ENCODE measurements at regions of chr7 and their contacts with region 1.

Region 1: DNA sequence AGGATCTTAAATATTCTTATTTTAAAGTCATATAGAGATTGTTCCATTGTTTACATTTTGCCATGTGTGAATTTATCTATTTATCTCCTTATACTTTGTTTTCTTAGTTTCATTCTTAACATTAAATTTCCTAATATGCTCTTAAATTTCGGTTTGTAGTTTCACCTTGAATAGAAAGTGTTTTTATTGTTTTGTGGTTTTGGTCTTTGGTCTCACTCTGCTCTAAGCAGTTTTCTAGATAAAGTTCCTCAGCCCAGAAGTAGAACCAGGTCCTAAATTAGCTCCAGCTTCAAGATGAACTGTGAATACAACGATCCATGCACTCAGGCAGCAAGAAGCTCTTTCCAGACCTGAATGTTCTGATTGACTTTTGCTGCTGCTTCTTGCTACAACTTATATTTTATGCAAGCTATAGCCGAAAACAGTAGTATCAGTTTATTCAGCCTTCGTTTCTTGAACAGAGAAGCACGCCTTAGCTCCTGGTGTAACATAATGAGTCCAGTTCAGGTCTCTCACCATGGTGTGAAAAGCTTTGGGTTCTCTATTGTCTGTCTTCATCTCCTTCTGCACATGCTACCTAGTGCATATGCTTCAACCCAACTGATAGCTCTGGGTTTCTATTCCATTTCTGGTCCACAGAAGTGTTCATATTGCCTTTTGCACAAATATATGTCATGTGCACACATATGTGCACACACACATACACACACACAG is 95.3 kb downstream of the SEM1 start:
- DNase-seq: no peak
- ATAC-seq: no peak
- H3K4me3 ChIP-seq: no peak overlapping the region
- H3K4me3 Mint-ChIP-seq: no peak overlapping the region
- H3K27ac ChIP-seq: no peak overlapping the region
- H3K27ac Mint-ChIP-seq: no peak overlapping the region
- H3K4me1 ChIP-seq: no peaks in the 10 kb centered on the region
- H3K4me1 Mint-ChIP-seq: no peaks in the 10 kb centered on the region
- H3K27me3 ChIP-seq: no peaks in the 10 kb centered on the region
- H3K27me3 Mint-ChIP-seq: peaks cover 7% of the 10 kb centered on the region
- CTCF ChIP-seq: no peak

Region 2: GRCh38 chr7:96558530-96558929 is 55.8 kb before region 1 on chr7:
- CTCF ChIA-PET with region 1: no interaction called
- POLR2A ChIA-PET with region 1: no interaction called
- intact Hi-C with region 1: loop called in 1 of 2 experiments (anchors 5 kb)
- DNase-seq: no peak
- ATAC-seq: no peak
- H3K4me3 ChIP-seq: no peak overlapping the region
- H3K4me3 Mint-ChIP-seq: no peak overlapping the region
- H3K27ac ChIP-seq: no peak overlapping the region
- H3K27ac Mint-ChIP-seq: no peak overlapping the region
- H3K4me1 ChIP-seq: no peaks in the 10 kb centered on the region
- H3K4me1 Mint-ChIP-seq: no peaks in the 10 kb centered on the region
- H3K27me3 ChIP-seq: no peaks in the 10 kb centered on the region
- H3K27me3 Mint-ChIP-seq: peaks cover 5% of the 10 kb centered on the region
- CTCF ChIP-seq: no peak

Region 3: GRCh38 chr7:96589038-96589437 is 25.3 kb before region 1 on chr7:
- CTCF ChIA-PET with region 1: no interaction called
- POLR2A ChIA-PET with region 1: no interaction called
- intact Hi-C with region 1: no loop called
- DNase-seq: no peak
- ATAC-seq: no peak
- H3K4me3 ChIP-seq: no peak overlapping the region
- H3K4me3 Mint-ChIP-seq: no peak overlapping the region
- H3K27ac ChIP-seq: no peak overlapping the region
- H3K27ac Mint-ChIP-seq: no peak overlapping the region
- H3K4me1 ChIP-seq: no peaks in the 10 kb centered on the region
- H3K4me1 Mint-ChIP-seq: no peaks in the 10 kb centered on the region
- H3K27me3 ChIP-seq: peaks cover 0 to 4% of the 10 kb centered on the region in 2 experiments
- H3K27me3 Mint-ChIP-seq: peaks cover 12% of the 10 kb centered on the region
- CTCF ChIP-seq: no peak

Region 4: DNA sequence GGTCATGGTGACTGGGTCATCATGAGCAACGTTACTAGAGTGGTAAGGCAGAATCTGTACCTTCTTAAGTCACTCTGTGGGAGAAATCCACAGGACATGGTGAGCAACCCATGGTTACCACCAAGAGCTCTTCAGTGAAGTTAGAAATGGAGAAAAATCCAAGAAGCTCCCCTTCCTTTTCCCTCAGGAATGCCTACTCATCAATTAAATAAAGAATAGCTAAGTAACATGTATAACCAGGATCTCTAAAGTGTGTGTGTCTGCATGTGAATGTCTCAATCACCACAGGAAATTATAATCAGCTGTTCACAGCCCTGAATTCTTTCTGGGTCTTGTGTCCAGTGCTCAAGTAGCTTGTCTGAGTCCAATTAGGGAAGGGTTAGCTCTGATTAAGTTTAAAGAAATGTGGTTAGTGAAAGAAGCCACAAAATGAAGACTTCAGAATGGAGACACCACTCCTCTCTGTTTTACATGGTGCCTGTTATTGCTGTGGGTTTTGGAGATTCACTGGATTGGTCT is 22.1 kb after region 1 on chr7:
- CTCF ChIA-PET with region 1: no interaction called
- POLR2A ChIA-PET with region 1: no interaction called
- intact Hi-C with region 1: no loop called
- DNase-seq: no peak
- ATAC-seq: no peak
- H3K4me3 ChIP-seq: no peak overlapping the region
- H3K4me3 Mint-ChIP-seq: no peak overlapping the region
- H3K27ac ChIP-seq: no peak overlapping the region
- H3K27ac Mint-ChIP-seq: no peak overlapping the region
- H3K4me1 ChIP-seq: no peaks in the 10 kb centered on the region
- H3K4me1 Mint-ChIP-seq: no peaks in the 10 kb centered on the region
- H3K27me3 ChIP-seq: no peaks in the 10 kb centered on the region
- H3K27me3 Mint-ChIP-seq: peaks cover 2% of the 10 kb centered on the region
- CTCF ChIP-seq: no peak